ENCODE measurements at regions of chr6 and their contacts with region 1.

Region 1: GRCh38 chr6:30759575-30760239 is 15.4 kb upstream of the IER3 start:
- DNase-seq: peak; percentile 97
- ATAC-seq: peak; percentile 66
- H3K4me3 ChIP-seq: peak overlapping the region in 1 of 3 experiments; percentile 13; a peak in 1 of 6 replicates
- H3K27ac ChIP-seq: peak overlapping the region; percentile 80
- H3K4me1 ChIP-seq: peaks cover 81% of the 10 kb centered on the region
- H3K27me3 ChIP-seq: no peaks in the 10 kb centered on the region
- CTCF ChIP-seq: no peak
- EP300 ChIP-seq: peak; percentile 64 to 65; a peak in 3 of 4 replicates
- POLR2A ChIP-seq: no peak
- RAD21 ChIP-seq: no peak

Region 2: DNA sequence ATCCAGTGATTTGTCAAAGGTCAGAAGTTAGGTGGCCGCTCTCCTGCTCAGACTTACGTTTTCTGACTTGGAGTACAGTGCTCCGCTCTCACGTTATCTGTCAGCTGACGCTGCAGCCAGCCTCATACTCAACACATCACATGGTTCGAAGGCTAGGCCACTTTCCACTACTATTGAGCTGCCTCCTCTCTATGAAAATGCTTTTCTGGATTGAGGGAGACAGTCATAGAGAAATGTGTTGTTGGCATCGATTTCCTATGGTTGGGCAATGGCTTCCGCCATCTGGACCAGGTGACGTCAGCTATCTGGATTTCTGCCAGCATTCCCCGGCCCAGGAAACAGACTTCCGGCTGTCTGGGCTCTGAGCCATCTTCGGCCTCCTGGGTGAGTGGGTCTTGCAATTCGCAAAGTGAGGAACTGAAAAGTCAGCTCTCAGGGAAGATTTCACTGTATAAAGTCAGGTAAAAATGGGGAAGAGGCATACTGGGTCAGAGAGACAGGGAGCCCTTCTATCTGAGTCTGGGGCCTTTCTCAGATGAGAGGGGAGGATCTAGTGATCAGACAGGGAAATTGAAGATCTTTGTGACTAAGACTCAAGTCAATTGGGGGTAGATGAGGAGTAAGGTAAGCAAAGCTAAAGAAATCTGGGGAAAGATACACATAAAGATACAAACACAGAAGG is 22.2 kb after region 1 on chr6:
- CTCF ChIA-PET with region 1: no interaction called
- POLR2A ChIA-PET with region 1: interaction called, 305 read pairs
- in situ Hi-C with region 1: no loop called
- intact Hi-C with region 1: no loop called
- DNase-seq: peak; percentile 96
- ATAC-seq: peak; percentile 87
- H3K4me3 ChIP-seq: peak overlapping the region; percentile 39 to 49 (median 43); a peak in 5 of 6 replicates
- H3K27ac ChIP-seq: peak overlapping the region; percentile 83
- H3K4me1 ChIP-seq: peaks cover 86% of the 10 kb centered on the region
- H3K27me3 ChIP-seq: no peaks in the 10 kb centered on the region
- CTCF ChIP-seq: 0 out of 2 replicates have a peak, but pooled peaks have one; percentile 12
- EP300 ChIP-seq: peak; percentile 90 to 93
- POLR2A ChIP-seq: peak; percentile 20 to 34; a peak in 2 of 4 replicates
- RAD21 ChIP-seq: peak; percentile 20; the same call in 1 of the 2 replicates

Region 3: DNA sequence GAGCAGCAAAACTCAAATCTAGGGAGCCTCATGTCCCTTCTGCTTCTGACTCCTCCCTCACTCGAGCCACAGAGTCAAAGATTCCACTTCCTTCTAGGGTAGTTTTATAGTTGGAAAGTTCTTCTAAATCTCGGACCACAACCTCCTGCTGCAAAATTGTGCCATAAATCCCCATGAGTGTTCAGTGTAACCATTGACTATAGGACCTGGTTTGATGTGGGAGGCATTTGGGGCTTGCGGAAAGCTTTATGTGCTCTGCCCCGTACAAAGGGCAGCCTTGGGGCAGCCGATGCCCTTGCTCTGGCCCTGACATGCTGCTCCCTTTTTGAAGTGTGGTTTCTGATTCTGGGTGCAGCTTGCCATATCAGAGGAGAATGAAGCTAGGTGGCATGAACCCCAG is 28.2 kb after region 1 on chr6:
- CTCF ChIA-PET with region 1: no interaction called
- POLR2A ChIA-PET with region 1: interaction called, 305 read pairs
- in situ Hi-C with region 1: no loop called
- intact Hi-C with region 1: no loop called
- DNase-seq: peak; percentile 88
- ATAC-seq: peak; percentile 88
- H3K4me3 ChIP-seq: no peak overlapping the region
- H3K27ac ChIP-seq: peak overlapping the region; percentile 53
- H3K4me1 ChIP-seq: peaks cover 71% of the 10 kb centered on the region
- H3K27me3 ChIP-seq: no peaks in the 10 kb centered on the region
- CTCF ChIP-seq: no peak
- EP300 ChIP-seq: peak; percentile 43 to 70; a peak in 2 of 4 replicates
- POLR2A ChIP-seq: no peak
- RAD21 ChIP-seq: no peak

Region 4: DNA sequence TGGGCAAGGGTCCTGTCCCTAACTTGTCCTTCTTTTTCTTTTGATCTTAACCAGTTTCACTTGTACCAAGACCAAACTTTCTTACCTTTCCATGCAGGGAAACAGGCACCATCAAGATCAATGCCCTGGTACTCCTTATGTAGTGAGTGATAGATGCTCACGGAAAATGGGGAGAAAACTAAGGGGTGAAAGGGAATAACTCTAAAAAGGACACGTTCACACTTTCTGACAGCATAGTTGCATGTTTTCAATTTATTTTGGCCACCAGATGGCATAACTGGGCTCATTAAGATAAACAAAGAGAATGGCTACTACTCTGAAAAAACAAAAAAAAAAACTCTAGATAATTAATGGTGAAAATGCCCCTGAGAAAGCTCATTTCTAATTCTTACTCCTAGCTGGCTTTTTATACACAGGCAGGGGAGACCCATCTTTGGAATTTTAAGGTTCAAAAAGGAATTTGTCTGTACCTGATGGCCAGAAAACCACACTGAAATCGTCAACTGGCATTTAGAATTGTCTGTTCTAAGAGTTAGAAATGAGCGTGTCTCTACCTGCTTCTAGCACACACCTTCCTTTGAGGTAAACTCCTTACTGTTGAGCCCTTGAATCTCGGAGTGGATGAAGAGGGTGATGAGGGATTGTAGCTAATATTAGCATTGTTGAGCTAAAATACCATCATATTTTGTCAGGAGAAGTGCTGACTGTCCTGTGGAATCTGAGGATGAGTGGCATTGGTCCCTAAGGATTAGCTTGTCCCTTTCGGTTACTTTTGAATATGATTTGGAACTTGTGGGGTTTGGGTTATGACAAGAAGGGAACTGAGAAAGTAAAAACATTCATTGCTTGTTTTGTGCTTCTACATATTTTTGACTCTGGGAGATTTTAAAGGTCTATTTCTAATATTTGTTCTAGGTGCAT is 62.4 kb after region 1 on chr6:
- CTCF ChIA-PET with region 1: no interaction called
- POLR2A ChIA-PET with region 1: interaction called, 15 read pairs
- in situ Hi-C with region 1: no loop called
- intact Hi-C with region 1: loop called (anchors 1 kb)
- DNase-seq: peak; percentile 70
- ATAC-seq: peak; percentile 49
- H3K4me3 ChIP-seq: peak overlapping the region in 2 of 3 experiments; percentile 20 to 35; a peak in 3 of 6 replicates
- H3K27ac ChIP-seq: peak overlapping the region; percentile 79
- H3K4me1 ChIP-seq: peaks cover 71% of the 10 kb centered on the region
- H3K27me3 ChIP-seq: no peaks in the 10 kb centered on the region
- CTCF ChIP-seq: peak; percentile 55
- EP300 ChIP-seq: no peak
- POLR2A ChIP-seq: no peak
- RAD21 ChIP-seq: peak; percentile 30; the same call in 1 of the 2 replicates

Region 5: DNA sequence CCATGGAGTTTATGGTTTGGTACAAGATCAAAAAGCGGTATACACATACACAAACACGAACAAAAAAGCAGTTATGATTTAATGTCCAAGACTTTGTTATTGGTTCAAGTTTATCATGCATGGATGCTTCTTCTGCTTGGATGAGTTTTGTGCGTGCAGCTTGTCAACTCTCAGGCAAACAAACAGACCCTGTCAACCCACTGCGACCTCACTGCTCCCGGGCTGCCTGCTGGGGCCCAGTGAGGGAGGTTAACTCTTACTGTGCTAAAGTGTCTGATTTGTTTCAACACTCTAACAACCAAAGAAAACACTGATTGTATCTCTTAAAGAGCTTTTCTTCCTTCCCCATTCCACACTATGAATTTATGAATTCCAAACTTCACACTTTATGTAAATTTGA is 97.8 kb after region 1 on chr6:
- CTCF ChIA-PET with region 1: no interaction called
- POLR2A ChIA-PET with region 1: no interaction called
- in situ Hi-C with region 1: no loop called
- intact Hi-C with region 1: no loop called
- DNase-seq: no peak
- ATAC-seq: peak; percentile 57
- H3K4me3 ChIP-seq: no peak overlapping the region
- H3K27ac ChIP-seq: no peak overlapping the region
- H3K4me1 ChIP-seq: peaks cover 49% of the 10 kb centered on the region
- H3K27me3 ChIP-seq: 0 out of 5 replicates have a peak, but pooled peaks cover 0 to 6% of the 10 kb centered on the region in 2 experiments
- CTCF ChIP-seq: no peak
- EP300 ChIP-seq: no peak
- POLR2A ChIP-seq: no peak
- RAD21 ChIP-seq: no peak

Measured in HepG2 (cell line).